ENCODE measurements at regions of chrX and their contacts with region 1.

Region 1: DNA sequence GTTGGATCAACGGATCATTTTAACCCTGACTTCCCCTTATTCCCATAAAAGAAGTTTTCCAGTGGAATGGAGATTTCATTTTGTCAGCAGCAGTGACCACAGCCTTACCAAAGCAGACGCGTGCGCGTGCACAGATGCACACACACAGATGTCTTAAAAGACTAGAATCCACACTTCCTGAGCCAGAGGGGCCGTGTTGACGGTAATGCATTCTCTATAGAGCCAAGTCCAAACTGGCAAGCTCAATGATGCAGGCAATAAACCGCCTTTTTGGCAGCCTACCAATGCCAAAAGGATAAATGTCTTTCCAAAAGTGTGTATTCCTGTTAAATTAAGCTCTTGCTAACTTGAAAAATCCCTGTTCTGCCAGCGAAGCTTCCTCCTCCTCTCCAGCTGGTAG is 18.8 kb upstream of the CLDN34 start:
- DNase-seq: no peak
- H3K4me3 ChIP-seq: no peak overlapping the region
- H3K27ac ChIP-seq: no peak overlapping the region
- H3K4me1 ChIP-seq: no peaks in the 10 kb centered on the region
- H3K27me3 ChIP-seq: peaks cover 0 to 13% of the 10 kb centered on the region in 2 donors
- CTCF ChIP-seq: no peak
- POLR2A ChIP-seq: no peak

Region 2: GRCh38 chrX:9171841-9172463 is 776.5 kb before region 1 on chrX:
- intact Hi-C with region 1: loop called (anchors 5 kb)
- DNase-seq: no peak
- H3K4me3 ChIP-seq: no peak overlapping the region
- H3K27ac ChIP-seq: no peak overlapping the region
- H3K4me1 ChIP-seq: no peaks in the 10 kb centered on the region
- H3K27me3 ChIP-seq: peaks cover 0 to 9% of the 10 kb centered on the region in 2 donors
- CTCF ChIP-seq: no peak
- POLR2A ChIP-seq: no peak